Activated T-helper 1 cell treated with anti-CD3 and anti-CD28 coated beads, Interleukin-12 subunit alpha, Interleukin-12 subunit beta, Interleukin-2, Interleukin-4 antibody, amounts not matched to agents 30 ng/mL and 10 ng/mL and 1 ng/mL, durations not matched to agents 14 hours and 24 hours and 36 hours (primary cell): ENCODE measurements at regions of chr6 and their contacts with region 1.

Region 1: GRCh38 chr6:41920921-41921711 is at the starts of genes BYSL and MED20:
- DNase-seq: peak; percentile 89
- H3K4me3 Mint-ChIP-seq: peak within 1 kb of the TSS; percentile 98
- H3K27ac Mint-ChIP-seq: peak within 1 kb of the TSS; percentile 98
- H3K4me1 Mint-ChIP-seq: peaks cover 53% of the 10 kb centered on the region
- H3K27me3 Mint-ChIP-seq: no peaks in the 10 kb centered on the region
- total RNA-seq, gene BYSL: 82.9 and 88.5 TPM in 2 replicates
- total RNA-seq, gene MED20: 19.0 and 23.8 TPM in 2 replicates

Region 2: GRCh38 chr6:41735427-41736356 is 185.4 kb before region 1 on chr6 and contains the start of gene TFEB:
- intact Hi-C with region 1: loop called (anchors 1 kb)
- DNase-seq: peak; percentile 92
- H3K4me3 Mint-ChIP-seq: peak within 1 kb of the TSS; percentile 80
- H3K27ac Mint-ChIP-seq: peak within 1 kb of the TSS; percentile 31
- H3K4me1 Mint-ChIP-seq: peaks cover 23% of the 10 kb centered on the region
- H3K27me3 Mint-ChIP-seq: no peaks in the 10 kb centered on the region
- total RNA-seq, gene TFEB: 15.6 and 17.2 TPM in 2 replicates

Region 3: GRCh38 chr6:41895300-41896233 is 25.5 kb before region 1 on chr6 and contains the start of gene USP49:
- intact Hi-C with region 1: loop called (anchors 1 kb)
- DNase-seq: peak; percentile 84
- H3K4me3 Mint-ChIP-seq: no peak within 1 kb of the TSS
- H3K27ac Mint-ChIP-seq: peak within 1 kb of the TSS; percentile 97
- H3K4me1 Mint-ChIP-seq: peaks cover 10% of the 10 kb centered on the region
- H3K27me3 Mint-ChIP-seq: no peaks in the 10 kb centered on the region
- total RNA-seq, gene USP49: 4.8 and 5.3 TPM in 2 replicates

Region 4: GRCh38 chr6:41958022-41958856 is 37.1 kb after region 1 on chr6:
- intact Hi-C with region 1: loop called (anchors 1 kb)
- DNase-seq: no peak
- H3K4me3 Mint-ChIP-seq: peak overlapping the region; percentile 29
- H3K27ac Mint-ChIP-seq: peak overlapping the region; percentile 88
- H3K4me1 Mint-ChIP-seq: peaks cover 26% of the 10 kb centered on the region
- H3K27me3 Mint-ChIP-seq: no peaks in the 10 kb centered on the region

Region 5: DNA sequence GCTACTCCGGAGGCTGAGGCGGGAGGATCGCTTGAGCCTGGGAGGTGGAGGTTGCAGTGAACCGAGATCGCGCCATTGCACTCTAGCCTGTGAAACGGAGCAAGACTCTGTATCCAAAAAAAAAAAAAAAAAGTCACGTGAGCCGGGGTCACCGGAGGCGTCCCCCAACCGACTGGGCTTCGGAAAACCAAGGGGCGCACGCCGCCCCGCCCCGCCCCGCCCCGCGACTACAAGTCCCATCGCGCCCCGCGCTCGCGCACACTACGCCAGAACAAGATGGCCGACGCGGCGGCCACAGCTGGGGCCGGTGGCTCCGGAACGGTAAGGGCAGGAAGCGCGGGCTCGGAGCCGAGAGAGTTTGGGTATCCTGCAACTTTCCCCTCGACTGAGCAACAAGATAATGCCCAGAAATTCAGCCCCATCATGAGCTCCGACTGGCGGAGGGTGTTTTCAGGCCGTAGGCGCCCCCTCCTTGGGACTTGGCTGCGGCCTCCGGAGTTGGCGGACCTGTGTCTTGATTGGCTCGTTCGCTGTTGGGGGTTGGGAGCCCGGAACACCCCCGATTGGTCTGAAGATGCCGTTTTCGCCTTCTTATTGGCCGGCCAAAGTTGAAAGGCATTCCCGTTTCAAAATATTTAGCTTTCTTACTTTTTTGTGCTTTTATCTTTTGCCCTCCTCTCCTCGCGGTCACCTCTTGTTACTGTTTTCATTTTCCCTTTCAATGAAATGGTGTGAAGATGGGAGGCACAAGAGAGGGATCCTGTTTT is 129.3 kb after region 1 on chr6 and contains the start of gene TAF8:
- intact Hi-C with region 1: loop called (anchors 1 kb)
- DNase-seq: peak; percentile 87
- H3K4me3 Mint-ChIP-seq: peak within 1 kb of the TSS; percentile 93
- H3K27ac Mint-ChIP-seq: peak within 1 kb of the TSS; percentile 92
- H3K4me1 Mint-ChIP-seq: peaks cover 58% of the 10 kb centered on the region
- H3K27me3 Mint-ChIP-seq: no peaks in the 10 kb centered on the region
- total RNA-seq, gene TAF8: 36.7 and 38.3 TPM in 2 replicates